ENCODE measurements at regions of chr16 and their contacts with region 1.

Region 1: GRCh38 chr16:75983741-75984381 is 257.6 kb upstream of the CPHXL start:
- DNase-seq: no peak
- H3K4me3 ChIP-seq: no peak overlapping the region
- H3K27ac ChIP-seq: peak overlapping the region in 11 of 59 donors; percentile 3 to 49 (median 31)
- H3K27me3 ChIP-seq: no peaks in the 10 kb centered on the region
- CTCF ChIP-seq: no peak

Region 2: GRCh38 chr16:76023835-76024234 is 40.0 kb after region 1 on chr16:
- intact Hi-C with region 1: loop called in 1 of 2 experiments (anchors 5 kb)
- DNase-seq: no peak
- H3K4me3 ChIP-seq: no peak overlapping the region
- H3K27ac ChIP-seq: no peak overlapping the region
- H3K27me3 ChIP-seq: no peaks in the 10 kb centered on the region
- CTCF ChIP-seq: no peak